Sigmoid colon (tissue), 7 donors: ENCODE measurements at regions of chr11 and their contacts with region 1.

Region 1: GRCh38 chr11:74449369-74449931 is 17.9 kb downstream of the KCNE3 start:
- DNase-seq: peak; percentile 68
- H3K4me3 ChIP-seq: no peak overlapping the region
- H3K27ac ChIP-seq: no peak overlapping the region
- H3K4me1 ChIP-seq: peaks cover 0 to 5% (median under 1%) of the 10 kb centered on the region in 4 donors
- H3K27me3 ChIP-seq: no peaks in the 10 kb centered on the region
- CTCF ChIP-seq: peak; percentile 32 to 77 (median 73)
- EP300 ChIP-seq: no peak
- POLR2A ChIP-seq: no peak

Region 2: GRCh38 chr11:74255741-74256369 is 193.6 kb before region 1 on chr11:
- intact Hi-C with region 1: loop called (anchors 2 kb)
- DNase-seq: no peak
- H3K4me3 ChIP-seq: no peak overlapping the region
- H3K27ac ChIP-seq: no peak overlapping the region
- H3K4me1 ChIP-seq: peaks cover 0 to 19% (median 18%) of the 10 kb centered on the region in 4 donors
- H3K27me3 ChIP-seq: no peaks in the 10 kb centered on the region
- CTCF ChIP-seq: peak; percentile 62 to 90 (median 86)
- EP300 ChIP-seq: no peak
- POLR2A ChIP-seq: no peak

Region 3: GRCh38 chr11:74388678-74389327 is 60.6 kb before region 1 on chr11:
- intact Hi-C with region 1: loop called (anchors 1 kb)
- DNase-seq: peak; percentile 72
- H3K4me3 ChIP-seq: no peak overlapping the region
- H3K27ac ChIP-seq: no peak overlapping the region
- H3K4me1 ChIP-seq: peaks cover 0 to 6% (median 0%) of the 10 kb centered on the region in 4 donors
- H3K27me3 ChIP-seq: no peaks in the 10 kb centered on the region
- CTCF ChIP-seq: peak; percentile 43 to 76 (median 66)
- EP300 ChIP-seq: no peak
- POLR2A ChIP-seq: no peak

Region 4: DNA sequence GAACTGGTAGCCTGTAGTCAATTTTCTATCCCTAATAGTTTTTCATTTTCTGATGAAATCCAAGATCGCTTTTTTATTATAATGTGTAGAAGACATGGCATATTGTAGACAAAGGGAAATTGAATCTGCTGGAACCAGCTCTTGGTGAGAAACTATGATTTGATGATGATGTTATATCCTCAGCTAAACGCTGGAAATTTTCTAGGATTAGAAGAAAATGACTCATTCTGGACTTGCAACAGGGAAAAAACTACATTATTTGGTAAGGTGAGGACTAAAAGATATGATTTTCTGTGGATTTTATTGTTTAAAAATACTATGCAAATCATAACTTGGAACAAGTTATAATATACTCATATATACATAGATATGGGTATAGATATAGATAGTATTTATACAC is 37.1 kb before region 1 on chr11:
- intact Hi-C with region 1: no loop called
- DNase-seq: no peak
- H3K4me3 ChIP-seq: no peak overlapping the region
- H3K27ac ChIP-seq: no peak overlapping the region
- H3K4me1 ChIP-seq: peaks cover 0 to 7% (median 4%) of the 10 kb centered on the region in 4 donors
- H3K27me3 ChIP-seq: peaks cover 0 to 7% (median 0%) of the 10 kb centered on the region in 3 donors
- CTCF ChIP-seq: no peak
- EP300 ChIP-seq: no peak
- POLR2A ChIP-seq: no peak

Region 5: DNA sequence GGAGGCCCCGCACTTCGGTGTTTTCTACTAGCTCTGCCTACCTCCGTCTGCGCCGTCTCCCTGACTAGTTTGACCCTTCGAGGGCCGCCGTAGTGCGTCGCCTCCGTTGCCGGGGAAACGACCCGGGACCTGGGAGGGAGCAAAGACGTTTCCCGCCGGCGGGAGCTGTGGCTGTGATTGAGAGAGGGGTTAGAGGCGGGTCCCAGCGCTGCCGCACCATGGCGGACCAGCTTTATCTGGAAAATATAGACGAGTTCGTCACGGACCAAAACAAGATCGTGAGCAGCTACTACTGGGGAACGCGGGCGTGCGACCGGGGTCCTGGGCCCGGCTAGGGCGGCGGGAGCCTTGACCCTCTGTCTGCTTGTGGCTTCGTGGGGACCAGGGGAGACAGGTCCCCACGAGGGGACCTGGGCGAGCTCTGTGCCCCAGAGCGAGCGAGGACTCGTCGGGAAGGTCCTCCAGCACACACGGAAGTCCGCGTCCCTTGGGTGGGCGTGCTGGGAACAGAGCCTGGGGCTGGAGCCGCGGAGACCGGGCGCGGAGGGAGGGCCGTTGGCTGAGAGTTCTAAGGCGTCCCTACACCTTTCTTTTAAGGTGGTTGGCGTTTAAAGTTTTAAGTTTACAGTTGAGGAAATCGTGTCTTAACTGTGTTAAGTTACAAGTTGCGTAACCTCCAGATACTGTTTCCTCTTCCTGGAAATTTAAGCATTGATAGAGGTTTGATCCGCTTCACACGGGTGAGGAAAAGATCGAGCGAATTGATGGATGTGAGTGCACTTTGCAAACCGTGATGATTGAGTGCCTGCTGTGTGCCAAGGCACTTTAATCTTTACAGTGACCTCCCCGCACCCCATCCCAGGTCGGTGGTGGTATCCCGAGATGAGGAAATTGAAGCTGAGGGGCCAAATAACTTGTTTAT is 143.3 kb after region 1 on chr11 and contains the start of gene POLD3:
- intact Hi-C with region 1: loop called (anchors 10 kb)
- DNase-seq: peak; percentile 95
- H3K4me3 ChIP-seq: peak within 1 kb of the TSS; percentile 84 to 93 (median 88)
- H3K27ac ChIP-seq: peak within 1 kb of the TSS; percentile 77 to 82 (median 80)
- H3K4me1 ChIP-seq: peaks cover 0 to 21% (median 15%) of the 10 kb centered on the region in 4 donors
- H3K27me3 ChIP-seq: no peaks in the 10 kb centered on the region
- CTCF ChIP-seq: no peak
- EP300 ChIP-seq: no peak
- POLR2A ChIP-seq: no peak
- total RNA-seq, gene POLD3: 11.2 to 23.0 (median 14.8) TPM